Body of pancreas (tissue), 4 donors: ENCODE measurements at regions of chr6 and their contacts with region 1.

Region 1: GRCh38 chr6:69835414-69836179 is 30.8 kb upstream of the COL19A1 start:
- DNase-seq: peak; percentile 22 to 64 (median 32)
- ATAC-seq: peak; percentile 76
- H3K4me3 ChIP-seq: no peak overlapping the region
- H3K27ac ChIP-seq: no peak overlapping the region
- H3K4me1 ChIP-seq: peaks cover 3% of the 10 kb centered on the region
- H3K27me3 ChIP-seq: no peaks in the 10 kb centered on the region
- CTCF ChIP-seq: peak; percentile 67 to 85 (median 80)
- POLR2A ChIP-seq: no peak

Region 2: GRCh38 chr6:70107852-70108629 is 272.4 kb after region 1 on chr6:
- intact Hi-C with region 1: loop called (anchors 10 kb)
- DNase-seq: no peak
- ATAC-seq: peak; percentile 61
- H3K4me3 ChIP-seq: no peak overlapping the region
- H3K27ac ChIP-seq: no peak overlapping the region
- H3K4me1 ChIP-seq: peaks cover 24% of the 10 kb centered on the region
- H3K27me3 ChIP-seq: no peaks in the 10 kb centered on the region
- CTCF ChIP-seq: peak; percentile 25 to 87 (median 74)
- POLR2A ChIP-seq: no peak